ENCODE measurements at regions of chr13 and their contacts with region 1.

Region 1: DNA sequence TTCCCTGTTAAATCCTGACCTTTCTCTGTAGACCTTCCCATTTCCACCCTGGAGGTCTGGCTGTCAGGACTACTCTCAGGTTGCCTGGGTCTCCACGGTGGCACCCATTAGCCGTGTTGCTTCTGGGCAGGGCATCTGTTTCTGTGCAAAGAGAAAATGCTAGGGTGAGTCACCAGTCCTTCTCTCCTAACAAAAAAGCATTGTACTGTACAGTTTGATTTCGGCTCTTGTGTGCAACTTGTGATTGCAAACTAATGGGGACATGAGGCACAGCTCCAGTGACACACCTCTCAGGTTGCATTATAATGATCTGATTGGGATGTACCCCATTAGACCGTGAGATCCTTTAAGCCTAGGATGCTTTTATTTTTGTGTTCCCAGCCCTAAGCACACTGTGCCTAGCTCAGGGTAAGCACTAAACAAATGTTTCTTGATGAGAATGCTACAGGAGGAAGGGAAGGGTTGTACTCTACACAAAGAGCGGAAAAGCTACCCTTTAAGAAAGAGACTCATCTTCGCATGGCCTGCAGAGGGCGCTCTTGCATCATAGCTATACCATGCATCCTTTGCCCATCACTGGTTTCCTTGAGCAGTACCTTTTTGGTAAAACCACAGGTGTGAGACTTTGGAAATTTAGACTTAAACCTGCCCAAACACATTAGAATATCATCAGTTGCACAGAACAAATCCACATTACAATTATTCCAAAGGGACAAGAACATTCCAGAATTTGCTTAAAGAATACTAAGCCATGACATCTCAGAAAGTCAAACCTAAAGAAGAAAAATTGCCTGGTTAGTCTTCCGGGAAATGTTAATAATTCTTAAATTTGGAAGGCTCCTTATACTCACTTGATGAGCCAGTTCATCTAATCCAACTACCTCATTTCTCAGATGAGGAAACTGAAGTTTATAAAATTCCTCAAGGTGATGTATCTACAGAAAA is 20.3 kb upstream of the TRIM13 start:
- DNase-seq: peak; percentile 54 to 86 (median 75)
- ATAC-seq: peak; percentile 67 to 87
- H3K4me3 ChIP-seq: no peak overlapping the region
- H3K27ac ChIP-seq: no peak overlapping the region
- H3K4me1 ChIP-seq: peaks cover 4% of the 10 kb centered on the region
- H3K27me3 ChIP-seq: no peaks in the 10 kb centered on the region

Region 2: DNA sequence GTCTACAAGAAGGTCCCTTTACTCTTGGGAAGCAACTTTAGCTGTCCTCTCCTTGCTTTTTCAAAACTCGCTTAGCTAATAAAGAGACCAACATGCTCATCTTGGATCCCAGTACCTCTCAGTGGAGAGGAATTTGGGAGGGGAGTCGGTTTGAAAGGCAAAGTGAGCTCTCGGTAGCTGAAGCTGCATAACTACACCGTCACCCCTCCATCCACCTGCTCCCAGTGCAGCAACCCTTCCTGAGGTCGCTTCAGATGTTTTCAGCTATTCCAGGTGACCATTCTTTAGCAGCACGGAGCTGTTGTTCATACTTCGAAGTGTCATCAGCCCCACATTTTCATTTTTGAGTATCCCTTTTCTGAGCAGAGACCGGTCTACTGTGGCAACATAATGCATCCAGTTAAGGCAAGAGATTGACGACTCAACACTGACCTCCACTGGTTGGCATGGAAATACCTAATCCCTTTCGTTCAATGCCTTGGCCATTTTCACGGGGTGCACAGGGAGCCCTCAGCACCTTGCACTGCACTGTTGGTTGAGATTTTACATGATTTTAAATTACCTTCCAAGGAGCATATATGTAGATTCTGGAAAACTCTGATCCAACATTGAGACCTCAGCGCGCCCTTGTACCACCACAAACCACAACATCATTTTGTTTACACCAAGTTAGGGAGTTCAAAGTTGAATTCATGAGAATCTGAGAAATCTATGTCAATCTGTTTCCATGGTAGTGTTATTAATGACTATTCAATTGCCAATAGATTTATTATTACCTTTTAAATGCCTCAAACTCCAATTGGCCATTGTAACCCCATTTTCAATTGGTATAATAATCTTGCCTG is 824.7 kb after region 1 on chr13:
- intact Hi-C with region 1: loop called in 1 of 4 experiments (anchors 5 kb)
- DNase-seq: peak in 2 of 3 donors; percentile 37 to 52
- ATAC-seq: peak; percentile 88 to 91
- H3K4me3 ChIP-seq: no peak overlapping the region
- H3K27ac ChIP-seq: no peak overlapping the region
- H3K4me1 ChIP-seq: peaks cover 10% of the 10 kb centered on the region
- H3K27me3 ChIP-seq: no peaks in the 10 kb centered on the region

Region 3: DNA sequence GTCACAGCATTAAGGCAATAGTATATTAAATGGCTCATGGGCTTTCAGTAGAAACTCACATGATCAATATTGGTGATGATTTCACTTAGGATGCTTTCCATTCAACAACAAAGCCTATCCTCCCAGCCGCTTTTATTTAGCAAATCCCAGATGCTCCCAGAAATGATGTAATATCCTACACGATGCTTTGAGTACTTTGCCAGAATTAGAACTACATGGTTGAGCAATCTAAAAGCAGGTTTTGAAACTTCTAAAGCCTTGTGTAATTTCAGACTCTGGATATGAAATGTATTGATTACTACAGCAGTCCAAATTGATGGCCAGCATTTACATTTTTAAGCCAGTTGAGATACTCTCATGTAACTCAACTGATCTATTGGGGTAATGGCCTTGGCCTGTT is 853.3 kb after region 1 on chr13:
- intact Hi-C with region 1: loop called in 1 of 4 experiments (anchors 10 kb)
- DNase-seq: no peak
- ATAC-seq: no peak
- H3K4me3 ChIP-seq: no peak overlapping the region
- H3K27ac ChIP-seq: no peak overlapping the region
- H3K4me1 ChIP-seq: no peaks in the 10 kb centered on the region
- H3K27me3 ChIP-seq: peaks cover 3% of the 10 kb centered on the region

Region 4: GRCh38 chr13:50911937-50912795 is 935.6 kb after region 1 on chr13:
- intact Hi-C with region 1: loop called in 3 of 4 experiments (anchors 5 to 10 kb)
- DNase-seq: peak; percentile 83 to 94 (median 92)
- ATAC-seq: peak; percentile 9 to 52
- H3K4me3 ChIP-seq: no peak overlapping the region
- H3K27ac ChIP-seq: peak overlapping the region; percentile 6
- H3K4me1 ChIP-seq: peaks cover 7% of the 10 kb centered on the region
- H3K27me3 ChIP-seq: no peaks in the 10 kb centered on the region

Region 5: DNA sequence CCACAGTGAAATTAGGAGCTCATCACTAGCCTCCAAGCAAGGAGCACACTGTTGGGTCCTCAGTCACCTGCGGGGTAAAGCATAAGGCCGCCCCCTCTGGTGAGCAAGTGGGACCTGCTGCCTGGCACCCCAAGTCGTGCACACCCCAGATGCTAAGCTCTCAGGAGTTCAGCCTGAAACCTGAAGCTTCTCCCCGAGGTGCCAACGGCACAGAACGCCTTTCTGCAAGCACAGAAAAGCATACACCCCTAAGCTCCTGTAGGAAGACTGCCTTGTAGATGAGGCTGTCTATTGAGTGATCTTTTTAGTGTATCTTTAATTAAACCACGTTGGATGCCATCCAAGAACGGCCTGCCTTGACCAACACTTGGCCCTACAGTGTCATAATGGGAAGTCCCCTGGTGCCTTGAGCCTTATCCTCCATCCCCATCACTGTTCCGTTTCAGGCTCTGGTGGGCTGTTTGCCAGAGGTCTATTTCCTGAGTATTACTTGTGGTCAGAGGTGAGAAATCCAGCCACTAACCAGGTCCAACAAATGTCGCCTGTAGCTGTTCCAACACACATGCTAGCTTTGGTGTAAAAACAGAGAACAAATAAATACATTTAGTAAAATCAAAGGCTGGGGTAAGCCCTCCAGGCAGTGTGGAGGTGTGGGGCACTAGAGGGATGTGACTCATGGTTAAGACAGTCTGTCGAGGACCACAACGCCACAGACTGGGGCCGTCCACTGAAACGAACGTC is 1089.7 kb after region 1 on chr13:
- intact Hi-C with region 1: loop called in 2 of 4 experiments (anchors 5 kb)
- DNase-seq: peak in 1 of 3 donors; percentile 55
- ATAC-seq: peak in 1 of 2 donors; percentile 58
- H3K4me3 ChIP-seq: no peak overlapping the region
- H3K27ac ChIP-seq: peak overlapping the region; percentile 9
- H3K4me1 ChIP-seq: peaks cover 4% of the 10 kb centered on the region
- H3K27me3 ChIP-seq: no peaks in the 10 kb centered on the region